ENCODE measurements at regions of chr3 and their contacts with region 1.

Region 1: GRCh38 chr3:129606636-129607390 is at the start of gene PLXND1:
- DNase-seq: peak; percentile 85
- H3K4me3 ChIP-seq: peak within 1 kb of the TSS; percentile 82
- H3K27ac ChIP-seq: peak within 1 kb of the TSS; percentile 97
- H3K4me1 ChIP-seq: peaks cover 91% of the 10 kb centered on the region
- H3K27me3 ChIP-seq: peaks cover 16% of the 10 kb centered on the region
- CTCF ChIP-seq: no peak
- total RNA-seq, gene PLXND1: 45.5 TPM

Region 2: GRCh38 chr3:129490242-129491045 is 116.4 kb before region 1 on chr3:
- intact Hi-C with region 1: loop called (anchors 5 kb)
- DNase-seq: peak; percentile 80
- H3K4me3 ChIP-seq: no peak overlapping the region
- H3K27ac ChIP-seq: peak overlapping the region; percentile 68
- H3K4me1 ChIP-seq: peaks cover 55% of the 10 kb centered on the region
- H3K27me3 ChIP-seq: no peaks in the 10 kb centered on the region
- CTCF ChIP-seq: peak; percentile 96

Region 3: DNA sequence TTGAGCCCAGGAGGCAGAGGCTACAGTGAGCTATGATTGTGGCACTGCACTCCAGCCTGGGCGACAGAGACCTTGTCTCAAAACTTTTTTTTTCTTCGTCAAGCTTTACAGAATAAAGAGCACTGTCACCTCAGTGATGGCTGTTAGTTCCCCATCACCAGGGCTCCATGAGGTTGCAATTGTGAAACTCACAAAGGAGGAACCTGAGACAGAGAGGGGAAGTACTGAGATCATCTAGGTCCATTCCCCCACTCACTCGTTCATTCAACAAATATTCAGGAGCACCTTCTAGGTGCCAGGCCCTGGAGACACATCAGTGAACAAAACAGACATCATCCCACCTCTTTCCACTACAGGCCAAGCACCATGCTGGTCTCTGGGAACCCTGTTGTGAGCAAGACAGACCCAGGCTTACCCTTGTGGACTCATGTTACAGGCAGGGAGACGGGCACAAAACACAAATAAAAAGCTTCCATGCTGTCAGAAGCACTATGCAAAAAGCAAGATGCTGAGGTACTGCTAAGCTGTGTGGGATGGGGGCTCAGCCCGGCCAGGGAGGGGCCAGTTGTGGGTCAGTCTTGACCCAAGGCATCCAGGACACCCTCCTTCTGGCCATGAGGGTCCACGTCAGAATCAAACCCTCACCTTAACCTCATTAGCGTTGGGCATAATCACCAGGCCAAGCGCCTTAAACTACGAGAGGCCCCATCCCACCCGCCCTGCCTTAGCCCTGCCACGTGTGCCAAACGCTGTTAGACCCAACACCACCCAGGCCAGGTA is 80.5 kb before region 1 on chr3:
- intact Hi-C with region 1: no loop called
- DNase-seq: no peak
- H3K4me3 ChIP-seq: no peak overlapping the region
- H3K27ac ChIP-seq: no peak overlapping the region
- H3K4me1 ChIP-seq: peaks cover 10% of the 10 kb centered on the region
- H3K27me3 ChIP-seq: no peaks in the 10 kb centered on the region
- CTCF ChIP-seq: no peak

Region 4: GRCh38 chr3:129723558-129724324 is 116.9 kb after region 1 on chr3:
- intact Hi-C with region 1: no loop called
- DNase-seq: peak; percentile 23
- H3K4me3 ChIP-seq: peak overlapping the region; percentile 58
- H3K27ac ChIP-seq: peak overlapping the region; percentile 81
- H3K4me1 ChIP-seq: peaks cover 33% of the 10 kb centered on the region
- H3K27me3 ChIP-seq: no peaks in the 10 kb centered on the region
- CTCF ChIP-seq: no peak

Region 5: DNA sequence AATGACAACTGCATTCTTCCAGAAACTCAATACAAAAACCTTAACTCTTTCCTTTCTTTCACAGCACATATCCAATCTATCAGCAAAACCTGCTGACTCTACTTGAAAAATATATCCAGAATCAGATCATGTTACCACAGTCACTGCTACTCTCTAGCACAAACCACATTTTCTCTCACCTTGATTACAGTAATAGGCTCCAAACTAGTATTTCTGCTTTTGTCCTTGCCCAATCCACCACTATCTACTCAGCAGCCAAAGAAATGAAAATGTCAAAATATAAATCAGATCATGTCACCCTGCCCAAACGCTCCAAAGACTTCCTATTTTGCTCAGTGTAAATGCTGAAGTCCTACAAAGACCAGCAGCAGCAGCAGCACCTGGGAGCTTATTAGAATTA is 271.6 kb after region 1 on chr3:
- intact Hi-C with region 1: no loop called
- DNase-seq: no peak
- H3K4me3 ChIP-seq: no peak overlapping the region
- H3K27ac ChIP-seq: no peak overlapping the region
- H3K4me1 ChIP-seq: no peaks in the 10 kb centered on the region
- H3K27me3 ChIP-seq: no peaks in the 10 kb centered on the region
- CTCF ChIP-seq: no peak

Measured in left ventricle myocardium inferior (tissue), 1 donor.